GM12878 (cell line): ENCODE measurements at regions of chr5 and their contacts with region 1.

Region 1: GRCh38 chr5:119328753-119329602 is 26.8 kb upstream of the TNFAIP8 start:
- DNase-seq: no peak
- ATAC-seq: no peak
- H3K4me3 ChIP-seq: no peak overlapping the region
- H3K27ac ChIP-seq: peak overlapping the region; percentile 7; the same call in 1 of the 2 replicates
- H3K4me1 ChIP-seq: peaks cover 48% of the 10 kb centered on the region
- H3K27me3 ChIP-seq: no peaks in the 10 kb centered on the region
- CTCF ChIP-seq: no peak
- EP300 ChIP-seq: no peak
- POLR2A ChIP-seq: no peak
- RAD21 ChIP-seq: no peak

Region 2: DNA sequence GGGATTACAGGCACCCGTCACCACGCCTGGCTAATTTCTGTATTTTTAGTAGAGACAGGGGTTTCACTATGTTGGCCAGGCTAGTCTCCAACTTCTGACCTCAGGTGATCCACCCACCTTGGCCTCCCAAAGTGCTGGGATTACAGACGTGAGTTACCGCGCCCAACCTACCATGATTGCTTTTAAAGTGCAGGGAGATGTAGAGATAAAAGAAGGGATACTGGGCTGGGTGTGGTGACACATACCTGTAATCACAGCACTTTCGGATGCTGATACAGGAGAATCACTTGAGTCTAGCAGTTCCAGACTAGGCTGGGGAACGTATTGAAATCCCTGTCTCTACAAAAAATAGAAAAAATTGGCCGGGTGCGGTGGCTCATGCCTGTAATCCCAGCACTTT is 289.7 kb before region 1 on chr5:
- CTCF ChIA-PET with region 1: no interaction called
- POLR2A ChIA-PET with region 1: no interaction called
- RAD21 ChIA-PET with region 1: no interaction called
- SMC1A ChIA-PET with region 1: no interaction called
- in situ Hi-C with region 1: no loop called
- intact Hi-C with region 1: no loop called
- DNase-seq: no peak
- ATAC-seq: no peak
- H3K4me3 ChIP-seq: no peak overlapping the region
- H3K27ac ChIP-seq: no peak overlapping the region
- H3K4me1 ChIP-seq: no peaks in the 10 kb centered on the region
- H3K27me3 ChIP-seq: no peaks in the 10 kb centered on the region
- CTCF ChIP-seq: no peak
- EP300 ChIP-seq: no peak
- POLR2A ChIP-seq: no peak
- RAD21 ChIP-seq: no peak

Region 3: GRCh38 chr5:119367502-119368237 is 38.7 kb after region 1 on chr5:
- CTCF ChIA-PET with region 1: interaction called, 187 read pairs
- POLR2A ChIA-PET with region 1: interaction called, 657 read pairs
- RAD21 ChIA-PET with region 1: interaction called, 501 read pairs
- SMC1A ChIA-PET with region 1: interaction called, 1,117 read pairs
- in situ Hi-C with region 1: no loop called
- intact Hi-C with region 1: no loop called
- DNase-seq: peak; percentile 81
- ATAC-seq: peak; percentile 72
- H3K4me3 ChIP-seq: peak overlapping the region; percentile 59
- H3K27ac ChIP-seq: peak overlapping the region; percentile 95
- H3K4me1 ChIP-seq: peaks cover 44% of the 10 kb centered on the region
- H3K27me3 ChIP-seq: no peaks in the 10 kb centered on the region
- CTCF ChIP-seq: no peak
- EP300 ChIP-seq: peak; percentile 92 to 95
- POLR2A ChIP-seq: no peak
- RAD21 ChIP-seq: 0 out of 2 replicates have a peak, but pooled peaks have one; percentile 8